Transverse colon (tissue), 4 donors: ENCODE measurements at regions of chr7 and their contacts with region 1.

Region 1: DNA sequence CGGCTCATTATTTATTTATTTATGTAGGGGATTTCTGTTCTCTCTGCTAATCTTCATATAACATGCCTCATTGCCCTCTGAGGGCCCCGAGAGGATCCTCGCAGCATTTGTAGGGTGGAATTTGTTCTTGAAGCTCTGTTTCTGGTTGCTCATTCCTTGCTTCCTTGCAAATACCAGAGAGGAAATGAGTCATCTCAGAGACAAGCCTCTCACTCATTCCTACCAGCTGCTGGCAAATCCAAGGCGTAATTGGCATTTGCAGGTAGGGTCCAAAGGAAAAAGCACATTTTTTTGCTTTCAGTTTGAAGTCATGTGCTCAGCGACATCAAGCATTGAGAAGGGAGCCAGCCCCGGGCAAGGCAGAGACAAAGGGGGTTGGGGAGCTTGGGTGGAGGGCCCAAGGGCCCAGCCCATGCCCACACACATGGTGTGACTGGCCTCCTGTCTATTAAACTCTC is 501.6 kb downstream of the GALNT17 start:
- DNase-seq: no peak
- H3K4me3 ChIP-seq: no peak overlapping the region
- H3K27ac ChIP-seq: peak overlapping the region in 2 of 4 donors; percentile 20 to 44
- H3K4me1 ChIP-seq: peaks cover 0 to 8% (median 0%) of the 10 kb centered on the region in 4 donors
- H3K27me3 ChIP-seq: no peaks in the 10 kb centered on the region
- CTCF ChIP-seq: no peak
- EP300 ChIP-seq: no peak
- POLR2A ChIP-seq: no peak

Region 2: GRCh38 chr7:70063927-70064326 is 1569.7 kb before region 1 on chr7:
- in situ Hi-C with region 1: no loop called
- intact Hi-C with region 1: no loop called
- DNase-seq: no peak
- H3K4me3 ChIP-seq: no peak overlapping the region
- H3K27ac ChIP-seq: no peak overlapping the region
- H3K4me1 ChIP-seq: no peaks in the 10 kb centered on the region
- H3K27me3 ChIP-seq: no peaks in the 10 kb centered on the region
- CTCF ChIP-seq: no peak
- EP300 ChIP-seq: no peak
- POLR2A ChIP-seq: no peak

Region 3: DNA sequence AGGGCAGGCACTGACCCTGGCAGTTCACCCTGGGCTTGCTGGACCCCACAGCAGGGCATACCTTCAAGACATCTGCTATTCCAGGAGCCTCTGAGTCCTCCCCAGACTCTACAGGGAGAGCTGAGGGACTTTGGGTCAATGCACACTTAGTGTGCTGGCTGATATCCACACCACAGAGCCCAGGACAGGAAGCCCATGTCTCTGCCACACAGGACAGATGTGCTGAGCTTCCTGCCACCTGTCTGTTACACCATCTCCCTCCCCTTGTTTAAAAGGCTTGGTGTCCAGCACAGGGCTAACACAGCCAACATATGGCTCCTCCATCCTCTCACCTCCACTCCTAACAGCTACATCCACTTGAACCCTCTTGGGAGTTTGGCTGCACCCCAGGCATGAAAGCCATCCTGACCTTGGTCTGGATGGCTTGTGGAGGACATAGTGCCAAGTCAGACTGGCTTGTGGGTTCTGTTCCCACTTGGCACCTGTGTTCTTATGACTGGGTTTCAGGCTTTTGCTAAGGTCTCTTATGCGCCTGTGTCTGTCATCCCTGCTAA is 28.2 kb after region 1 on chr7:
- in situ Hi-C with region 1: no loop called
- intact Hi-C with region 1: loop called (anchors 1 kb)
- DNase-seq: no peak
- H3K4me3 ChIP-seq: no peak overlapping the region
- H3K27ac ChIP-seq: no peak overlapping the region
- H3K4me1 ChIP-seq: no peaks in the 10 kb centered on the region
- H3K27me3 ChIP-seq: no peaks in the 10 kb centered on the region
- CTCF ChIP-seq: no peak
- EP300 ChIP-seq: no peak
- POLR2A ChIP-seq: no peak